CD4-positive, alpha-beta T cell (primary cell): ENCODE measurements at regions of chr5 and their contacts with region 1.

Region 1: GRCh38 chr5:68252673-68253623 is 37.4 kb downstream of the PIK3R1 start:
- DNase-seq: peak; percentile 16 to 76 (median 42)
- ATAC-seq: no peak
- H3K4me3 ChIP-seq: no peak overlapping the region
- H3K4me3 Mint-ChIP-seq: peak overlapping the region; percentile 49
- H3K27ac ChIP-seq: no peak overlapping the region
- H3K27ac Mint-ChIP-seq: peak overlapping the region; percentile 82
- H3K4me1 ChIP-seq: peaks cover 54% of the 10 kb centered on the region
- H3K4me1 Mint-ChIP-seq: peaks cover 95% of the 10 kb centered on the region
- H3K27me3 ChIP-seq: no peaks in the 10 kb centered on the region
- H3K27me3 Mint-ChIP-seq: no peaks in the 10 kb centered on the region
- CTCF ChIP-seq: peak; percentile 71

Region 2: DNA sequence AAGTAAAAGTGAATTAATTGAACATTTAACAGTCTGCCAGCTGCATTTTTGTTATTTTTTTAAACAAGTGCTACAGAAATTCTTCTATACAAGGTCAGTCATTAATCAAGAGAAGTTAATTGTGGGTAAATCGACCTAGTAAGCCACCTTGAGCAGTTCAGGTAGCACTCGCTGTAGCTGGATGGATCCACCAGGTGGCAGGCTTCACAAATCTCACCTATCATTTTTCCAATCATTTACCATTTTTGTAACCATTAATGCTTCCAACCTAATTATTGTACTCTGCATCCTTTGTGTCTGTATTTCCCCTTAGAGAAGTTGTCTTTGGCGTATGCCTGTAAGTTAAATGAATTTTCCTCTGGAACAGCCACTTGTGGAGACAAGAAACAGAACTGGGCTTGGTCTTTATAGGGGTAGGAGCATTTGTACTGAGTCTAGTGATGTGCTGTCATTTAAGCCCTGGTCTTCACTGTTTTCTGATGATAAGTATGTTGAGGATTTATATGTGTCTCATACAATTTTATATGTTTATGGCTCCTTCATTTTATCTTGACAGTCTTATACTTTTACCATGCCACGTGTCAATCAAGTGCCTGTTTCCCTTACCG is 1095.9 kb before region 1 on chr5:
- CTCF ChIA-PET with region 1: no interaction called
- POLR2A ChIA-PET with region 1: interaction called, 3 read pairs
- intact Hi-C with region 1: loop called (anchors 5 to 10 kb)
- DNase-seq: peak; percentile 42 to 81 (median 50)
- ATAC-seq: peak; percentile 55
- H3K4me3 ChIP-seq: no peak overlapping the region
- H3K4me3 Mint-ChIP-seq: peak overlapping the region; percentile 17
- H3K27ac ChIP-seq: no peak overlapping the region
- H3K27ac Mint-ChIP-seq: peak overlapping the region; percentile 71
- H3K4me1 ChIP-seq: peaks cover 45% of the 10 kb centered on the region
- H3K4me1 Mint-ChIP-seq: peaks cover 59% of the 10 kb centered on the region
- H3K27me3 ChIP-seq: no peaks in the 10 kb centered on the region
- H3K27me3 Mint-ChIP-seq: no peaks in the 10 kb centered on the region
- CTCF ChIP-seq: peak; percentile 96

Region 3: DNA sequence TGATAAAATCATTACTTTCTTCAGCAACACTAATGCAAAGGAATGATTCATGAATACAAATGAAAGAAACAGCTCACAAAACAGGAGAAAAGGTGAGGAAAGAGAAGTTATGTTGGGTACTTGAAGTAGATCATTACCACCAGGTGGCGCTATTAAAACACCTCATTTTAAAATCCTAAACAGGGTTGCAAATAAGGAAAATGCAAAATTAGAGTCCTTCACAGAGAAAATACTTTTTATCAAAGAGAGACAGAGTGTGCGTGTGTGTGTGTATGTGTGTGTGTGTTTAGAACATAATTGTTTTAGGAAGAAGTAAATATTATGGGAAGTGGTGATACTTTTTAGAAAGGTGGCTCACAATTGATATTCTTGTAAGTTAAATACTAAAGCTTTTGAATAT is 1006.8 kb before region 1 on chr5:
- CTCF ChIA-PET with region 1: interaction called, 7 read pairs
- POLR2A ChIA-PET with region 1: interaction called, 4 read pairs
- intact Hi-C with region 1: loop called (anchors 1 to 2 kb)
- DNase-seq: peak in 5 of 14 experiments; percentile 7 to 83 (median 75)
- ATAC-seq: peak; percentile 39
- H3K4me3 ChIP-seq: no peak overlapping the region
- H3K4me3 Mint-ChIP-seq: no peak overlapping the region
- H3K27ac ChIP-seq: no peak overlapping the region
- H3K27ac Mint-ChIP-seq: no peak overlapping the region
- H3K4me1 ChIP-seq: peaks cover 12% of the 10 kb centered on the region
- H3K4me1 Mint-ChIP-seq: peaks cover 4% of the 10 kb centered on the region
- H3K27me3 ChIP-seq: no peaks in the 10 kb centered on the region
- H3K27me3 Mint-ChIP-seq: no peaks in the 10 kb centered on the region
- CTCF ChIP-seq: peak; percentile 91

Region 4: GRCh38 chr5:67659288-67659687 is 593.7 kb before region 1 on chr5:
- CTCF ChIA-PET with region 1: no interaction called
- POLR2A ChIA-PET with region 1: no interaction called
- intact Hi-C with region 1: no loop called
- DNase-seq: no peak
- ATAC-seq: no peak
- H3K4me3 ChIP-seq: no peak overlapping the region
- H3K4me3 Mint-ChIP-seq: no peak overlapping the region
- H3K27ac ChIP-seq: no peak overlapping the region
- H3K27ac Mint-ChIP-seq: no peak overlapping the region
- H3K4me1 ChIP-seq: no peaks in the 10 kb centered on the region
- H3K4me1 Mint-ChIP-seq: no peaks in the 10 kb centered on the region
- H3K27me3 ChIP-seq: no peaks in the 10 kb centered on the region
- H3K27me3 Mint-ChIP-seq: no peaks in the 10 kb centered on the region
- CTCF ChIP-seq: no peak

Region 5: DNA sequence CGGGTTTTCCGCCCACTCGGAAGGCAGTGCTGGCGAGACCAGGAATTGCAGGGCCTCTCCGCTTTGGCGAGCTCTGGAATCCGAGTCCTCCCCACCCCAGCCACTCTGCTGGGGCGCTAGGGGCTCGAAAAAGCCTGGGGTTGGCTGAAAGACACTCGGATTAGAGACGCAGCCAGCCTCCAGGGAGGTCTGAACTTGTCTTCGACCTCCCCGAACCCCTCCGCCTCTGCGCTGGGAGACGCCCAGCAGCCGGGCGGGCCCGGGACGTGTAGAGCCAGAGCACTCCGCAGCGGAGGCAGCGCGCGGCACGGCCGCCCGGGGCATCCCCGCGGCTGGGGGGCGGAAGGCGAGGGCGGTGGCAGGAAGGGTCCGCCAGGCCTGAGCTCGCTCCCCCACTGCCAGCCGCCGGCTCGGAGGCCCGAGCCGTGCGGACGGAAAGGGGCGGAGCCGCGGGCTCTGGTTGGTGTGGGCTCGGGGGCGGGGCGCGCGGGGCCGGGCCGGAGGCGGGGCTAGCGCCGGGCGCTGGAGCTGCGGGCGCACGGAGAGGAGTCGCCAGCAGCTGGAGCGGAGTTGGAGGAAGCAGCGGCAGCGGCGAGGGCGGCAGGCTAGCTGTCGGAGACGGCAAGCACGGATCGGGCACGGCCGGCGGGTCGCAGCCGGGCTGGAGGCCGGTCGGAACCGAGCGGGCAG is 37.6 kb before region 1 on chr5 and contains the start of gene PIK3R1:
- CTCF ChIA-PET with region 1: interaction called, 11 read pairs
- POLR2A ChIA-PET with region 1: interaction called, 41 read pairs
- intact Hi-C with region 1: loop called (anchors 5 kb)
- DNase-seq: peak; percentile 78 to 97 (median 90)
- ATAC-seq: peak; percentile 75
- H3K4me3 ChIP-seq: peak within 1 kb of the TSS; percentile 78
- H3K4me3 Mint-ChIP-seq: peak within 1 kb of the TSS; percentile 97
- H3K27ac ChIP-seq: peak within 1 kb of the TSS; percentile 91 to 93
- H3K27ac Mint-ChIP-seq: peak within 1 kb of the TSS; percentile 96
- H3K4me1 ChIP-seq: peaks cover 10% of the 10 kb centered on the region
- H3K4me1 Mint-ChIP-seq: peaks cover 47% of the 10 kb centered on the region
- H3K27me3 ChIP-seq: no peaks in the 10 kb centered on the region
- H3K27me3 Mint-ChIP-seq: no peaks in the 10 kb centered on the region
- CTCF ChIP-seq: peak; percentile 22
- total RNA-seq, gene PIK3R1: 455 to 459 TPM

Region 6: GRCh38 chr5:68272289-68272688 is 19.3 kb after region 1 on chr5:
- CTCF ChIA-PET with region 1: interaction called, 13 read pairs
- POLR2A ChIA-PET with region 1: interaction called, 14 read pairs
- intact Hi-C with region 1: no loop called
- DNase-seq: peak in 3 of 14 experiments; percentile 52 to 56 (median 54)
- ATAC-seq: no peak
- H3K4me3 ChIP-seq: no peak overlapping the region
- H3K4me3 Mint-ChIP-seq: no peak overlapping the region
- H3K27ac ChIP-seq: no peak overlapping the region
- H3K27ac Mint-ChIP-seq: peak overlapping the region; percentile 69
- H3K4me1 ChIP-seq: peaks cover 45% of the 10 kb centered on the region
- H3K4me1 Mint-ChIP-seq: peaks cover 96% of the 10 kb centered on the region
- H3K27me3 ChIP-seq: no peaks in the 10 kb centered on the region
- H3K27me3 Mint-ChIP-seq: no peaks in the 10 kb centered on the region
- CTCF ChIP-seq: peak; percentile 72

Region 7: GRCh38 chr5:68406767-68407241 is 153.9 kb after region 1 on chr5:
- CTCF ChIA-PET with region 1: no interaction called
- POLR2A ChIA-PET with region 1: no interaction called
- intact Hi-C with region 1: no loop called
- DNase-seq: peak in 1 of 14 experiments; percentile 36
- ATAC-seq: no peak
- H3K4me3 ChIP-seq: no peak overlapping the region
- H3K4me3 Mint-ChIP-seq: no peak overlapping the region
- H3K27ac ChIP-seq: no peak overlapping the region
- H3K27ac Mint-ChIP-seq: peak overlapping the region; percentile 2
- H3K4me1 ChIP-seq: peaks cover 14% of the 10 kb centered on the region
- H3K4me1 Mint-ChIP-seq: peaks cover 18% of the 10 kb centered on the region
- H3K27me3 ChIP-seq: no peaks in the 10 kb centered on the region
- H3K27me3 Mint-ChIP-seq: no peaks in the 10 kb centered on the region
- CTCF ChIP-seq: no peak

Region 8: DNA sequence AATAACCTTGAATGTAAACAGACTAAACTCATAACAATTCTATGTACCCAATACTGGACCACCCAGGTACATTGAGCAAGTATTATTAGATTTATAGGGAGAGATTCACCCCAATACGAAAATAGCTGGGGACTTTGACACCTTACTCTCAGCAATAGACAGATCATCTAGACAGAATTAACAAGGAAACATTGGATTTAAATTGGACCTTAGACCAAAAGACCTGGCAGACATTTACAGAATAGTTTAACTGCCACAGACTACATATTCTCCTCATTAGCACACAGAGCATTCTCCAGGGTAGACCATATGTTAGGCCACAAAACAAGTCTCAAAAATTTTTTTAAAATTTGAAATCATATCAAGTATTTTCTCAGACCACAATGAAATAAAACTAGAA is 360.0 kb after region 1 on chr5:
- CTCF ChIA-PET with region 1: no interaction called
- POLR2A ChIA-PET with region 1: no interaction called
- intact Hi-C with region 1: no loop called
- DNase-seq: no peak
- ATAC-seq: no peak
- H3K4me3 ChIP-seq: no peak overlapping the region
- H3K4me3 Mint-ChIP-seq: no peak overlapping the region
- H3K27ac ChIP-seq: no peak overlapping the region
- H3K27ac Mint-ChIP-seq: no peak overlapping the region
- H3K4me1 ChIP-seq: no peaks in the 10 kb centered on the region
- H3K4me1 Mint-ChIP-seq: no peaks in the 10 kb centered on the region
- H3K27me3 ChIP-seq: no peaks in the 10 kb centered on the region
- H3K27me3 Mint-ChIP-seq: peaks cover 4% of the 10 kb centered on the region
- CTCF ChIP-seq: no peak